ENCODE measurements at regions of chr4 and their contacts with region 1.

Region 1: GRCh38 chr4:167290678-167291077 is 56.4 kb upstream of the SPOCK3 start:
- DNase-seq: peak in 1 of 2 donors; percentile 17
- H3K4me3 ChIP-seq: no peak overlapping the region
- H3K27ac ChIP-seq: no peak overlapping the region
- H3K4me1 ChIP-seq: no peaks in the 10 kb centered on the region
- H3K27me3 ChIP-seq: no peaks in the 10 kb centered on the region
- CTCF ChIP-seq: peak in 1 of 7 experiments; percentile 18
- EP300 ChIP-seq: no peak
- POLR2A ChIP-seq: no peak

Region 2: GRCh38 chr4:167021545-167022155 is 269.0 kb before region 1 on chr4:
- intact Hi-C with region 1: loop called (anchors 5 kb)
- DNase-seq: peak; percentile 77 to 84
- H3K4me3 ChIP-seq: no peak overlapping the region
- H3K27ac ChIP-seq: no peak overlapping the region
- H3K4me1 ChIP-seq: peaks cover 0 to 6% (median 0%) of the 10 kb centered on the region in 4 donors
- H3K27me3 ChIP-seq: no peaks in the 10 kb centered on the region
- CTCF ChIP-seq: peak in 5 of 7 experiments; percentile 53 to 85 (median 74)
- EP300 ChIP-seq: no peak
- POLR2A ChIP-seq: no peak

Measured in stomach (tissue), 19 donors.